ENCODE measurements at regions of chr6 and their contacts with region 1.

Region 1: GRCh38 chr6:55069132-55069781 is 105.1 kb upstream of the HCRTR2 start:
- DNase-seq: peak; percentile 66
- ATAC-seq: peak; percentile 79
- H3K4me3 ChIP-seq: no peak overlapping the region
- H3K27ac ChIP-seq: no peak overlapping the region
- H3K4me1 ChIP-seq: no peaks in the 10 kb centered on the region
- H3K27me3 ChIP-seq: no peaks in the 10 kb centered on the region
- CTCF ChIP-seq: peak; percentile 87
- POLR2A ChIP-seq: no peak
- RAD21 ChIP-seq: peak; percentile 93

Region 2: GRCh38 chr6:53979468-53980067 is 1089.7 kb before region 1 on chr6:
- CTCF ChIA-PET with region 1: no interaction called
- POLR2A ChIA-PET with region 1: no interaction called
- dilution Hi-C with region 1: no loop called
- in situ Hi-C with region 1: loop called (anchors 5 kb)
- intact Hi-C with region 1: no loop called
- DNase-seq: peak; percentile 61
- ATAC-seq: peak; percentile 44; the same call in 1 of the 2 replicates
- H3K4me3 ChIP-seq: no peak overlapping the region
- H3K27ac ChIP-seq: no peak overlapping the region
- H3K4me1 ChIP-seq: peaks cover 4% of the 10 kb centered on the region
- H3K27me3 ChIP-seq: no peaks in the 10 kb centered on the region
- CTCF ChIP-seq: peak; percentile 83
- POLR2A ChIP-seq: no peak
- RAD21 ChIP-seq: peak; percentile 79

Region 3: GRCh38 chr6:54244430-54244829 is 824.8 kb before region 1 on chr6:
- CTCF ChIA-PET with region 1: no interaction called
- POLR2A ChIA-PET with region 1: no interaction called
- dilution Hi-C with region 1: no loop called
- in situ Hi-C with region 1: no loop called
- intact Hi-C with region 1: loop called (anchors 5 kb)
- DNase-seq: peak; percentile 24
- ATAC-seq: peak; percentile 37; the same call in 1 of the 2 replicates
- H3K4me3 ChIP-seq: no peak overlapping the region
- H3K27ac ChIP-seq: no peak overlapping the region
- H3K4me1 ChIP-seq: no peaks in the 10 kb centered on the region
- H3K27me3 ChIP-seq: no peaks in the 10 kb centered on the region
- CTCF ChIP-seq: peak; percentile 53
- POLR2A ChIP-seq: no peak
- RAD21 ChIP-seq: peak; percentile 61

Region 4: DNA sequence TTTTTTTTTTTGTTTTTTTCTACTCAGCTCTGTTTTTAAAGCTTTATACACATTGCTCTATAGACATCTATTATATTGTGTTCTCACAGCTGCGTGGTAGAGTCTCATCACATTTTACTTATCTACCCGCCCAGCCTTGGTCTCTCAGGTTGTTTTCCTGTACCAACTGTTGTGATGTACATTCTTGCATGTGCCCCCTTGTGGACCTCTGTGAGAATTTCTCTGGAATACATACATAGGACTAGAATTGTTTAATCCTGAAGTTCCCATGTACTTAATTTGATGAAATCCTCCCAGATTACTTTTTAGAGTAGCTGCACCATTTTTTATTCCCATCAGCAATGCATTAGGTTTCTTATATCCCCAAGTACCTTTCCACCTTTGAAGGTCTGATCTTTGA is 801.5 kb before region 1 on chr6:
- CTCF ChIA-PET with region 1: no interaction called
- POLR2A ChIA-PET with region 1: no interaction called
- dilution Hi-C with region 1: no loop called
- in situ Hi-C with region 1: loop called (anchors 25 kb)
- intact Hi-C with region 1: no loop called
- DNase-seq: peak; percentile 60
- ATAC-seq: peak; percentile 73
- H3K4me3 ChIP-seq: no peak overlapping the region
- H3K27ac ChIP-seq: no peak overlapping the region
- H3K4me1 ChIP-seq: no peaks in the 10 kb centered on the region
- H3K27me3 ChIP-seq: no peaks in the 10 kb centered on the region
- CTCF ChIP-seq: peak; percentile 54
- POLR2A ChIP-seq: no peak
- RAD21 ChIP-seq: peak; percentile 50

Region 5: GRCh38 chr6:54621285-54621684 is 448.0 kb before region 1 on chr6:
- CTCF ChIA-PET with region 1: no interaction called
- POLR2A ChIA-PET with region 1: no interaction called
- dilution Hi-C with region 1: no loop called
- in situ Hi-C with region 1: no loop called
- intact Hi-C with region 1: loop called (anchors 5 kb)
- DNase-seq: no peak
- ATAC-seq: no peak
- H3K4me3 ChIP-seq: no peak overlapping the region
- H3K27ac ChIP-seq: no peak overlapping the region
- H3K4me1 ChIP-seq: peaks cover 5% of the 10 kb centered on the region; the same call in 1 of the 2 replicates
- H3K27me3 ChIP-seq: no peaks in the 10 kb centered on the region
- CTCF ChIP-seq: peak; percentile 35
- POLR2A ChIP-seq: no peak
- RAD21 ChIP-seq: peak; percentile 25; the same call in 1 of the 2 replicates

Region 6: GRCh38 chr6:54697424-54697823 is 371.8 kb before region 1 on chr6:
- CTCF ChIA-PET with region 1: no interaction called
- POLR2A ChIA-PET with region 1: no interaction called
- dilution Hi-C with region 1: no loop called
- in situ Hi-C with region 1: loop called (anchors 10 kb)
- intact Hi-C with region 1: loop called (anchors 1 kb)
- DNase-seq: peak; percentile 16
- ATAC-seq: peak; percentile 64; the same call in 1 of the 2 replicates
- H3K4me3 ChIP-seq: no peak overlapping the region
- H3K27ac ChIP-seq: no peak overlapping the region
- H3K4me1 ChIP-seq: no peaks in the 10 kb centered on the region
- H3K27me3 ChIP-seq: no peaks in the 10 kb centered on the region
- CTCF ChIP-seq: peak; percentile 43
- POLR2A ChIP-seq: no peak
- RAD21 ChIP-seq: peak; percentile 47

Region 7: DNA sequence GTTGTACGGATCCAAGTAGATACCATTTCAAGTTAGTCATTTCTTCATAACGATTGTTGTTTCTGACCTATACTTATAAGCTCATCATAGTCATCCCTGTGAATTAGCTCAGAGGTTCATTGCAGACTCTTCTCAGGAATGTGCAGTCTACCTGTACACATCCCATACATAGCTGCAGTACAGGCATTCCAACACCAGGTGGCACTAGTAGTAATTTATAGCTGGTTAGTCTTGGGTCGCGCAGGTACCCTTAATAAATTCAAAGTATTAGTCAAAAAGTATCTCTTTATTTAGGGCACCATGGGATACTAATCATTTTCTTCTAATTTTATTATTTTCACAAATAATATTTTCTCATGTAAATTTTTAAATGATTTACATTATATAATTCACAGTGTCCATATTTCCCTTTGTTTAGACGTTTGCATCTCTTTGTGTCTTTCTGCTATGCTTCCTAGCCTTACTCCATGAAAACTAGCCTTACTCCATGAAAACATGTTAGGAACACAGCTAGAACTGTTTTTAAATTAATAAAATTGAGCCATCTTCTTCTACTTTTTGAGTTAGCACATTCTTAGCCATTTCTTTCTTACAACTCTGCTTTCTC is 351.3 kb before region 1 on chr6:
- CTCF ChIA-PET with region 1: interaction called, 4 read pairs
- POLR2A ChIA-PET with region 1: no interaction called
- dilution Hi-C with region 1: no loop called
- in situ Hi-C with region 1: no loop called
- intact Hi-C with region 1: loop called (anchors 1 kb)
- DNase-seq: peak; percentile 37
- ATAC-seq: peak; percentile 69; the same call in 1 of the 2 replicates
- H3K4me3 ChIP-seq: no peak overlapping the region
- H3K27ac ChIP-seq: no peak overlapping the region
- H3K4me1 ChIP-seq: peaks cover 2% of the 10 kb centered on the region; the same call in 1 of the 2 replicates
- H3K27me3 ChIP-seq: no peaks in the 10 kb centered on the region
- CTCF ChIP-seq: peak; percentile 63
- POLR2A ChIP-seq: no peak
- RAD21 ChIP-seq: peak; percentile 69

Region 8: DNA sequence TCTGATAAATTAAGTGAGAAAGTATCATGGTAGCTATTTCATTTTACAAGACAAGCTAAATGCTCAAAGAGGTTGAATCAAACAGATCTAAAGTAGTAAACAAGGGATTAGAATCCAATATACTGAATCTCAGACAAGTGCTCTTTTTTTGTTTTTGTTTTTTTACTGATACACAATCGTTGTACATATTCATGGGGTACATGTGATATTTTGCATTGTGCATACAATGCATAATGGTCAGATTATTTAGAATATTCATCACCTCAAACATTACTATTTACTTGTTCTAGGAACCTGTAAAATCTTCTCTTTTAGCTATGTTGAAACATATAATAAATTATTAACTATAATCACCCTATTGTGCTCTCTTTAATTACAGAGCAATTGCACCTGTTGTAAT is 48.0 kb after region 1 on chr6:
- CTCF ChIA-PET with region 1: no interaction called
- POLR2A ChIA-PET with region 1: no interaction called
- dilution Hi-C with region 1: no loop called
- in situ Hi-C with region 1: no loop called
- intact Hi-C with region 1: no loop called
- DNase-seq: no peak
- ATAC-seq: no peak
- H3K4me3 ChIP-seq: no peak overlapping the region
- H3K27ac ChIP-seq: no peak overlapping the region
- H3K4me1 ChIP-seq: no peaks in the 10 kb centered on the region
- H3K27me3 ChIP-seq: no peaks in the 10 kb centered on the region
- CTCF ChIP-seq: no peak
- POLR2A ChIP-seq: no peak
- RAD21 ChIP-seq: no peak

Measured in IMR-90 (cell line).